Thyroid gland (tissue), 4 donors: ENCODE measurements at regions of chr11 and their contacts with region 1.

Region 1: GRCh38 chr11:11320825-11321224 is 32.2 kb downstream of the CSNK2A3 start:
- DNase-seq: no peak
- H3K4me3 ChIP-seq: no peak overlapping the region
- H3K27ac ChIP-seq: no peak overlapping the region
- H3K4me1 ChIP-seq: no peaks in the 10 kb centered on the region
- H3K27me3 ChIP-seq: no peaks in the 10 kb centered on the region
- CTCF ChIP-seq: no peak
- POLR2A ChIP-seq: no peak

Region 2: DNA sequence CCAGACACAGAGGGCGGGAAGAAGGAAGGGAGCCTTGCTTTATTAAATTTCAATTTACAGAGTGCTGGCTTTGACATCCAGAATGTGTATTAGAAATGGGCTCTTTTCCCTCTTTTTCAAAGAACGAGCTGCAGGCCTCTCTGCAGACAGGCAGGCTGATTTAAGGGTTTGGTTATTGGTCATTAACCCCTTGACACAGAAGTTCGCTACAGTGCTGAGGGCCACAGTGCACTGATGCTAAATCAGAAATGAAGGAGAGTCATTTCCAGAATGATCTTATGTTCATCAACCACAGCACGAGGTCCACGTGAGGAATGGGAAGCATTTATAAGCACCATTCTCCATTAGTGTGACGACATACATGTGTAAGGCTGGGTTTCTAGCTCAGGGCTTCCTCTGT is 19.6 kb before region 1 on chr11:
- intact Hi-C with region 1: loop called (anchors 2 kb)
- DNase-seq: no peak
- H3K4me3 ChIP-seq: no peak overlapping the region
- H3K27ac ChIP-seq: no peak overlapping the region
- H3K4me1 ChIP-seq: peaks cover 0 to 7% of the 10 kb centered on the region in 2 donors
- H3K27me3 ChIP-seq: no peaks in the 10 kb centered on the region
- CTCF ChIP-seq: no peak
- POLR2A ChIP-seq: no peak